ENCODE measurements at regions of chr5 and their contacts with region 1.

Region 1: DNA sequence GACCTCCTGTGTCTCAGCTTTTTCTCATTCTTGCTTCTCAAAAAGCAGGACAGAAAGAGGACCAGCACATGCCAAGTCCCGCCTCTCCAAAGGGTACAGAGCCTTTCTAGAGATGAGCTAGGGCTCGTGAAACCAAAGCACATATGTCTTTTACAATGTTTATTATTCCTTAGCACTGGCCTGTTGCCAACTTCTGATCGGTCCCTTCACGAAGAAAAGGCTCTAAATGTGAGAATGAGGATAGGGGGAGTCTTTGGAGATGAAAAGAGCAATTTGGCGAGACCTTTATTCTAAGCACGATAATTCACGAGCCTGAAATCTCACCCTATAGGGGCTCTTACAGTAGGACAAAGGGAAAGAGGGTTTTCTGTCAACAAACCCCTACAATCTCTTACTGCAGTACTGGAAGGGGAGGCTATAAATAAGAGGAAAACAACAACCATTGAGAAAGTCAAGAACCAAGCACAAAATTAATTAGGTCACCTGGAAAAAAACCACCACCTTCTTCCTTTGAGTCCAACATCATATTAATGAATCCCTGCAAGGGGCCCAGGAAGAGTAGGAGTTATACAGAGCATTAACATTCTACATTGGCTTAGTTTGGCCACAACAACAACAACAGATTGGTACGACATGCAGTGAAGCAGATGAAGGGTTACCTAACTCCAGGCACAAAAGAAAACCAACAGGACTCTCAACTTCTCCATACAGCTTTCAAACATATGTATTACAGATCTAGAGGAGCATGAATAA is 309.5 kb downstream of the PDE4D start:
- DNase-seq: no peak
- ATAC-seq: no peak
- H3K4me3 ChIP-seq: no peak overlapping the region
- H3K27ac ChIP-seq: no peak overlapping the region
- H3K4me1 ChIP-seq: no peaks in the 10 kb centered on the region
- H3K27me3 ChIP-seq: no peaks in the 10 kb centered on the region
- CTCF ChIP-seq: no peak
- POLR2A ChIP-seq: no peak
- RAD21 ChIP-seq: no peak

Region 2: GRCh38 chr5:59532979-59533729 is 50.8 kb before region 1 on chr5:
- CTCF ChIA-PET with region 1: no interaction called
- POLR2A ChIA-PET with region 1: no interaction called
- dilution Hi-C with region 1: no loop called
- in situ Hi-C with region 1: no loop called
- intact Hi-C with region 1: loop called (anchors 5 kb)
- DNase-seq: no peak
- ATAC-seq: no peak
- H3K4me3 ChIP-seq: no peak overlapping the region
- H3K27ac ChIP-seq: no peak overlapping the region
- H3K4me1 ChIP-seq: no peaks in the 10 kb centered on the region
- H3K27me3 ChIP-seq: no peaks in the 10 kb centered on the region
- CTCF ChIP-seq: no peak
- POLR2A ChIP-seq: no peak
- RAD21 ChIP-seq: no peak

Measured in IMR-90 (cell line).